ENCODE measurements at regions of chr6 and their contacts with region 1.

Region 1: DNA sequence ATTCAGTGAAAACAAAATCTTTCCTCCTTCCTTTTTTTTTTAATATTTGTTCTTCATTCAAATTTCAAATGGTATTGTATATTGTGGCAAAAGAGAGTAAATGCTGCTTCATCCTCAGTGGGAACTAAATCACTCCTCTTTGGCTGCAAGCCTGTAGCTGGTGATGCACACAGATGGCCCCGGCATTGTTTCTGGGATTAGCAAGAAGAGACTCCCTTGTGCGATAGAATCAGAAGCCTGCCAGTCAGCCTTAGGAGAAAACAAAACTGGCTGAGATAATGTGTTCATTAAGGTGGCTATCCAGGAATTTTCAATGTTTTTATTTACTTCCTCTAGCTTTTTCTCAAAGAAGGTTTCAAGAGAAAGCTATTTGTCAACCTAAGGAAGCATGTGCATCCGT is 20.7 kb upstream of the ELOVL2 start:
- DNase-seq: no peak
- H3K4me3 ChIP-seq: no peak overlapping the region
- H3K27ac ChIP-seq: no peak overlapping the region
- H3K4me1 ChIP-seq: no peaks in the 10 kb centered on the region
- H3K27me3 ChIP-seq: peaks cover 0 to 3% of the 10 kb centered on the region in 2 experiments
- CTCF ChIP-seq: no peak
- POLR2A ChIP-seq: no peak

Region 2: GRCh38 chr6:10847684-10848083 is 217.2 kb before region 1 on chr6:
- CTCF ChIA-PET with region 1: interaction called, 17 read pairs
- POLR2A ChIA-PET with region 1: no interaction called
- dilution Hi-C with region 1: no loop called
- intact Hi-C with region 1: no loop called
- DNase-seq: no peak
- H3K4me3 ChIP-seq: no peak overlapping the region
- H3K27ac ChIP-seq: no peak overlapping the region
- H3K4me1 ChIP-seq: no peaks in the 10 kb centered on the region
- H3K27me3 ChIP-seq: peaks cover 0 to 2% of the 10 kb centered on the region in 2 experiments
- CTCF ChIP-seq: no peak
- POLR2A ChIP-seq: no peak

Region 3: DNA sequence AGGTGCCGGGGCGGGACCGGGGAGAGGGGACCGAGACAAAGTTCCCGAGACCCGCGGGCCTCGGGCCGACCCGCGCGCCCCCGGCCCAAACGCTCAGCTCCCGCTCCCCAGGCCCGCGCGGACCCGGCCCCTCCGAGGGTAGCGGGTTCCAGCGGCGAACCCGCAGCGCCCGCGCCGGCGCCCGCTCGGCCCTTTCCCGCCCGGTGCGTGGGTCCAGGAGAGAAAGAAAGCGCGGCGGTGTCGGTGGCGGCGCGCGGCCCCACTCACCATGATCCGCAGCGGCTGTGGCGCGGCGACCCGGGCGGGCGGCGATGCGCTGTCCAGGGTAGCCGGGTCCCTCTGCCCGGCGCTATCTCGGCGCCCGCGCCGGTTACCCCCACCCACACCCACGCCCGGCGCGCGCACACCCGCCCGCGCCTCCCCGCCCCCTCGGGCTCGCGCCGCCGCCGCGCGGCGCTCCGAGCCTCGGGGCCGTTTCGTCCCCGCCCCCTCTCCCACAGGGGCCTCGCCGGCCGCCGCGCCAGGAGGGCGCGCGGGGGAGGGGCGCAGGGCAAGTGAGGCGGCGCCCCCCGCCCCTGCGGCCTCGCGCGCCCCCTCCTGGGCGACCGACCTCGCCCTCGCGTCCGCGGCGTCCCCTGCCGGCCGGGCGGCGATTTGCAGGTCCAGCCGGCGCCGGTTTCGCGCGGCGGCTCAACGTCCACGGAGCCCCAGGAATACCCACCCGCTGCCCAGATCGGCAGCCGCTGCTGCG is 20.7 kb before region 1 on chr6 and contains the start of gene ELOVL2:
- CTCF ChIA-PET with region 1: interaction called, 10 read pairs
- POLR2A ChIA-PET with region 1: no interaction called
- dilution Hi-C with region 1: no loop called
- intact Hi-C with region 1: no loop called
- DNase-seq: peak; percentile 14
- H3K4me3 ChIP-seq: peak within 1 kb of the TSS in 2 of 3 experiments; percentile 26 to 28
- H3K27ac ChIP-seq: no peak within 1 kb of the TSS
- H3K4me1 ChIP-seq: peaks cover 3% of the 10 kb centered on the region
- H3K27me3 ChIP-seq: peaks cover 34 to 75% of the 10 kb centered on the region in 2 experiments
- CTCF ChIP-seq: peak; percentile 51 to 60
- POLR2A ChIP-seq: no peak
- total RNA-seq, gene ELOVL2: not detected in 2 replicates

Region 4: GRCh38 chr6:11050731-11051130 is 14.1 kb before region 1 on chr6:
- CTCF ChIA-PET with region 1: interaction called, 18 read pairs
- POLR2A ChIA-PET with region 1: no interaction called
- dilution Hi-C with region 1: no loop called
- intact Hi-C with region 1: no loop called
- DNase-seq: no peak
- H3K4me3 ChIP-seq: no peak overlapping the region
- H3K27ac ChIP-seq: no peak overlapping the region
- H3K4me1 ChIP-seq: no peaks in the 10 kb centered on the region
- H3K27me3 ChIP-seq: peaks cover 2 to 16% of the 10 kb centered on the region in 2 experiments
- CTCF ChIP-seq: no peak
- POLR2A ChIP-seq: no peak

Region 5: GRCh38 chr6:11404838-11405237 is 340.0 kb after region 1 on chr6:
- CTCF ChIA-PET with region 1: no interaction called
- POLR2A ChIA-PET with region 1: no interaction called
- dilution Hi-C with region 1: no loop called
- intact Hi-C with region 1: no loop called
- DNase-seq: no peak
- H3K4me3 ChIP-seq: no peak overlapping the region
- H3K27ac ChIP-seq: no peak overlapping the region
- H3K4me1 ChIP-seq: peaks cover 5% of the 10 kb centered on the region
- H3K27me3 ChIP-seq: no peaks in the 10 kb centered on the region
- CTCF ChIP-seq: no peak
- POLR2A ChIP-seq: no peak

Region 6: GRCh38 chr6:11785774-11786579 is 721.1 kb after region 1 on chr6:
- CTCF ChIA-PET with region 1: no interaction called
- POLR2A ChIA-PET with region 1: no interaction called
- dilution Hi-C with region 1: no loop called
- intact Hi-C with region 1: no loop called
- DNase-seq: no peak
- H3K4me3 ChIP-seq: no peak overlapping the region
- H3K27ac ChIP-seq: no peak overlapping the region
- H3K4me1 ChIP-seq: no peaks in the 10 kb centered on the region
- H3K27me3 ChIP-seq: peaks cover 2 to 3% of the 10 kb centered on the region in 2 experiments
- CTCF ChIP-seq: no peak
- POLR2A ChIP-seq: no peak